Activated CD8-positive, alpha-beta T cell treated with anti-CD3 and anti-CD28 coated beads, Interleukin-2, amount 10 ng/mL, durations not matched to agents 7 days and 5 days (primary cell): ENCODE measurements at regions of chr1 and their contacts with region 1.

Region 1: DNA sequence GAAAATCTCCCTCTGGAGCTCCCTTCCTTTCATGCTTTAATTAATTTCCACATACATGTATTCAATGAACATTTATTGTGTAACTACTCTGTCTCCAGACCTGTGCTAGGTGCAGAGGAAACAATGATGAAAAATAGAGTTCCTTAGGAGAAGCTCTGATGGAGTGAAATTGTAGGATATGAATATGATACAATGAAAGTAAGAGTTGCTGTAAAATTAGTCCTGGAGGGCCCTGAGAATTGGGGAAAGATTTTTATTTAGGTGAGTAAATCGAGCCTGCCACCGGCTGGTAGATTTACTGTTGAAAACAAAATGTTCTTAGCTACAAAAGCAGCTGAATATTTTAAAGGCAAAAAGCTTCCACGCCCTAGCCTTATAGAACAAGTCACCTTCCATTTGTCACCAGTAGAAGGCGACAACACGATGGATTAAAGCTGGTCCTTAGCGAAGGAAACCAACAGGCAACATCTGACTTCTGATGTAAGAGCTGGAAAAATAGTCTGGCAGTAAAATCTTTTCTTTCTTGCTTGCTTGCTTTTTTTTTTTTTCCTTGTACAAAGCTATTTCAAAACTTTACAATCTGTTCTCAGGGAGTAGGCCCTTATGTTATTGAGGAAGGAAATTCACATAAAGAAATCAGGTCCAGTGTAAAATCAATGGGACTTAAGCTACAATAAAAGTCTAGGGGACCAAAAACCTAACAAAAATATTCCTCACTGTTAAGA is 82.0 kb upstream of the ROR1 start:
- DNase-seq: peak; percentile 51
- ATAC-seq: peak; percentile 73
- H3K4me3 Mint-ChIP-seq: no peak overlapping the region
- H3K27ac Mint-ChIP-seq: no peak overlapping the region
- H3K4me1 Mint-ChIP-seq: peaks cover 3% of the 10 kb centered on the region
- H3K27me3 Mint-ChIP-seq: peaks cover 2% of the 10 kb centered on the region

Region 2: DNA sequence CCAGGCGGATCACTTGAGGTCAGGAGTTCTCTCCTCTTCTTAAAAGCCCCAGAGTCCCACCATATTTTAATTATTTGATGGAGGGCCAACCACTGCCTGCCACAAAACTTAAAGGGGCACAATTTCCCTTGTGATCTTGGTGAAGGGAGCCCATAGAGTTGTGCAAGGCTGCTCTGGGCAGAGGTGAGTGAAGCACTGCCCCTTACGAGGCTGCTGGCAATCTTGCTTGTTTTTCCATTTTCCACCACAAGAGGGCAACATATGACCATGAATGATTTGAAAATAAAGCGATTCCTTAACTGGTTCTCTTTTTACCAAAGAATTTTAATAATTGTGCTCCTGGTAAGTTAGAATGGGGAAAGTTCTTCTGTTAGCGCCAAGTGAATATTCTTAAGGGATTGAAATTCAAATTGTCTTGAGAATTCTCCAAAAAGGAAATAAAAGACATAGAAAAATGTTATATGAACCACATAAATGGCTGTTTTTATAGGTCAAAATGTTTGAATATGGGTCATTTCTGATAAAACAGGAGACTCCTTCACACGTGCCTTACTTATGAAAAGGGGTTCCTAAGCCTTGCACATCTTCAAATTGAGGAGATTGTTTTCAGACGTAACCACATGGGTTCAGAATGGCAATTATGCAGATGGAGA is 76.0 kb before region 1 on chr1:
- CTCF ChIA-PET with region 1: interaction called, 14 read pairs
- POLR2A ChIA-PET with region 1: no interaction called
- DNase-seq: peak; percentile 75
- ATAC-seq: peak; percentile 61
- H3K4me3 Mint-ChIP-seq: no peak overlapping the region
- H3K27ac Mint-ChIP-seq: no peak overlapping the region
- H3K4me1 Mint-ChIP-seq: peaks cover 3% of the 10 kb centered on the region
- H3K27me3 Mint-ChIP-seq: no peaks in the 10 kb centered on the region